CD14-positive monocyte (primary cell): ENCODE measurements at regions of chr9 and their contacts with region 1.

Region 1: DNA sequence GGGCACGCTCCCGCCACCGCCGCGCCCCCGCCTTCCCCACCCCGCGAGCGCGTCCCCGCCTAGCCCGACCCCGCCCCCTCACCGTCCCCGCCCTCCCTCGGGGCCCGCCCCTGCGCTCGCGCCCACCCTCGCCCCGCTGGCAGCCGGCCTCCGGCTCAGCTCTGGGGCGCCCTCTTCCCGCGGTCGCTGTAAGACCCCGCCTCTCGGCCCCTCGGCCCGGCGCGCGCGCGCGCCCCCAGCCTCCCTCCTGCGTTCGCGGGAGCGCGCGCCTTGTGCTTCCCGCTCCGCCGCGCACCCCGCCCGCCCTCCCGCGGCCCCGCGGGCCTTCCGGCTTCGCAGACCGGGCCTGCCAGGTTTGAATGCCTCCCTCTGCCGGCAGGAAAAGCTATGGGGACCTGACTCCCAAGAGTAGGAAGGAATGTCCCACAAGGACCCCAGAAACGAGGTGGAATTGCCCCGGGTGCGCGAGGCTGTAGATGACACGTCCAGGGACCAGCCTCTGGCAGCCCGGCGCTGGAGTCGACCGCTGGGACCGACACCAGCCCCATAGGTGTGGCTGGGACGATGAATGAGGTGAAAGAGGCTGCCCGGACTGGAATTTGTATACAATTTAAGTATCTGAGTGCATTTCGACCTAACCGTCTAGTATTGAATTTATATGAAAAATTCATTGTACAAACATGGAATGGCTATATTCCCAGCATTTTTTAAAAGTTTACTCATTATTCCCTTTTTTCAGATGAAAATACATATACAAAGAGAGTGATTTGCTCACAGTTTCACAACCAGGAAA is 416 bp upstream of the PTBP3 start:
- DNase-seq: peak; percentile 91 to 95 (median 94)
- H3K4me3 ChIP-seq: peak overlapping the region; percentile 69 to 96 (median 75)
- H3K4me3 Mint-ChIP-seq: peak overlapping the region; percentile 93 to 97
- H3K27ac ChIP-seq: peak overlapping the region; percentile 86 to 89
- H3K27ac Mint-ChIP-seq: peak overlapping the region; percentile 87 to 97 (median 95)
- H3K4me1 ChIP-seq: peaks cover 14 to 43% of the 10 kb centered on the region in 2 donors
- H3K4me1 Mint-ChIP-seq: peaks cover 29% of the 10 kb centered on the region
- H3K27me3 ChIP-seq: no peaks in the 10 kb centered on the region
- H3K27me3 Mint-ChIP-seq: peaks cover 0 to 5% (median 0%) of the 10 kb centered on the region in 3 donors
- CTCF ChIP-seq: peak; percentile 53

Region 2: GRCh38 chr9:112059145-112059965 is 274.5 kb before region 1 on chr9:
- intact Hi-C with region 1: no loop called
- DNase-seq: peak in 2 of 3 donors; percentile 36 to 46
- H3K4me3 ChIP-seq: no peak overlapping the region
- H3K4me3 Mint-ChIP-seq: no peak overlapping the region
- H3K27ac ChIP-seq: peak overlapping the region in 1 of 2 donors; percentile 86
- H3K27ac Mint-ChIP-seq: peak overlapping the region in 6 of 7 donors; percentile 49 to 95 (median 89)
- H3K4me1 ChIP-seq: peaks cover 16 to 18% of the 10 kb centered on the region in 2 donors
- H3K4me1 Mint-ChIP-seq: peaks cover 38% of the 10 kb centered on the region
- H3K27me3 ChIP-seq: no peaks in the 10 kb centered on the region
- H3K27me3 Mint-ChIP-seq: peaks cover 0 to 2% (median 0%) of the 10 kb centered on the region in 3 donors
- CTCF ChIP-seq: no peak

Region 3: GRCh38 chr9:112174218-112174964 is 159.4 kb before region 1 on chr9:
- intact Hi-C with region 1: loop called (anchors 2 to 5 kb)
- DNase-seq: peak; percentile 83 to 89 (median 85)
- H3K4me3 ChIP-seq: peak overlapping the region; percentile 40 to 79 (median 50)
- H3K4me3 Mint-ChIP-seq: peak overlapping the region; percentile 82 to 91
- H3K27ac ChIP-seq: peak overlapping the region; percentile 82 to 94
- H3K27ac Mint-ChIP-seq: peak overlapping the region; percentile 95 to 98 (median 98)
- H3K4me1 ChIP-seq: peaks cover 80 to 85% of the 10 kb centered on the region in 2 donors
- H3K4me1 Mint-ChIP-seq: peaks cover 85% of the 10 kb centered on the region
- H3K27me3 ChIP-seq: no peaks in the 10 kb centered on the region
- H3K27me3 Mint-ChIP-seq: peaks cover 0 to 2% (median 0%) of the 10 kb centered on the region in 3 donors
- CTCF ChIP-seq: no peak

Region 4: DNA sequence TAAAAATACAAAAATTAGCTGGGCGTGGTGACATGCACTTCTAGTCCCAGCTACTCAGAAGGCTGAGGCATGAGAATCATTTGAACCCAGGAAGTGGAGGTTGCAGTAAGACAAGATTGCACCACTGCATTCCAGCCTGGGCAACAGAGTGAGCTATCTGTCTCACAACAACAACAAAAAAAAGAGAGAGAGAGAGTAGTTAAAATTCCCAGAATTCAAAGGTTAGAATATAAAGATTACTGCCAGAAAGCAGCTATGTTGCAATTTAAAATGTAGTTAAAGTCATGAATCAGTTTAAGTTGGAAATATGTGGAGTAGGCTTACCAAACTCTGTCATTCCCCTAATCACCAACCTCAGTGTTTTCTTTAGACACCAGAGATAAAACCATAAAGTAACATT is 100.1 kb before region 1 on chr9:
- intact Hi-C with region 1: no loop called
- DNase-seq: no peak
- H3K4me3 ChIP-seq: no peak overlapping the region
- H3K4me3 Mint-ChIP-seq: no peak overlapping the region
- H3K27ac ChIP-seq: peak overlapping the region in 1 of 2 donors; percentile 18
- H3K27ac Mint-ChIP-seq: peak overlapping the region in 4 of 7 donors; percentile 33 to 89 (median 58)
- H3K4me1 ChIP-seq: no peaks in the 10 kb centered on the region
- H3K4me1 Mint-ChIP-seq: peaks cover 8% of the 10 kb centered on the region
- H3K27me3 ChIP-seq: no peaks in the 10 kb centered on the region
- H3K27me3 Mint-ChIP-seq: no peaks in the 10 kb centered on the region
- CTCF ChIP-seq: no peak